CD4-positive, alpha-beta T cell (primary cell): ENCODE measurements at regions of chr14 and their contacts with region 1.

Region 1: GRCh38 chr14:95460647-95461478 is 55.6 kb downstream of the SYNE3 start:
- DNase-seq: no peak
- ATAC-seq: no peak
- H3K4me3 ChIP-seq: no peak overlapping the region
- H3K4me3 Mint-ChIP-seq: no peak overlapping the region
- H3K27ac ChIP-seq: peak overlapping the region; percentile 80 to 84
- H3K27ac Mint-ChIP-seq: peak overlapping the region; percentile 95
- H3K4me1 ChIP-seq: peaks cover 64% of the 10 kb centered on the region
- H3K4me1 Mint-ChIP-seq: peaks cover 63% of the 10 kb centered on the region
- H3K27me3 ChIP-seq: no peaks in the 10 kb centered on the region
- H3K27me3 Mint-ChIP-seq: no peaks in the 10 kb centered on the region
- CTCF ChIP-seq: no peak

Region 2: DNA sequence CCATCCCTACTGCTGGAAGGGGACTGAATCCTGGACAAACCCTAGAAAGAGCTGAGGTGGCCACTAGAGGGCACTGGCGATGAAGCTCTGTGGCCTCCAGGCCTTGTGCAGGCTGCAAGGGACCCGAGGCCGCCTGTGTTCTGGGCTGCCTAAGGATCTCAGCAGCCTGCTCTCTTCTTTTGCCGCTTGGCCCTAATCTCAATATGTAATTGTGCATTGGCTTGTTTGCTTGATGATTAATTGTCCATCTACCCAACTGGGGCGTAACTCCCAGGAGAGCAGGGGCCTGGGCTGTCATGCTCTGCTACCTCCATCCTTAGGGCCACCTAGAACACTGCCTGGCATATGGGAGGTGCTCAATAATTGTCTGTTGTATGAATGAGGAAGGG is 18.2 kb before region 1 on chr14:
- CTCF ChIA-PET with region 1: interaction called, 18 read pairs
- POLR2A ChIA-PET with region 1: interaction called, 11 read pairs
- intact Hi-C with region 1: loop called in 1 of 2 experiments (anchors 1 kb)
- DNase-seq: peak; percentile 65 to 86 (median 72)
- ATAC-seq: peak; percentile 96
- H3K4me3 ChIP-seq: no peak overlapping the region
- H3K4me3 Mint-ChIP-seq: no peak overlapping the region
- H3K27ac ChIP-seq: peak overlapping the region in 1 of 2 donors; percentile 8
- H3K27ac Mint-ChIP-seq: peak overlapping the region; percentile 73
- H3K4me1 ChIP-seq: peaks cover 8% of the 10 kb centered on the region
- H3K4me1 Mint-ChIP-seq: peaks cover 23% of the 10 kb centered on the region
- H3K27me3 ChIP-seq: no peaks in the 10 kb centered on the region
- H3K27me3 Mint-ChIP-seq: no peaks in the 10 kb centered on the region
- CTCF ChIP-seq: peak; percentile 85

Region 3: DNA sequence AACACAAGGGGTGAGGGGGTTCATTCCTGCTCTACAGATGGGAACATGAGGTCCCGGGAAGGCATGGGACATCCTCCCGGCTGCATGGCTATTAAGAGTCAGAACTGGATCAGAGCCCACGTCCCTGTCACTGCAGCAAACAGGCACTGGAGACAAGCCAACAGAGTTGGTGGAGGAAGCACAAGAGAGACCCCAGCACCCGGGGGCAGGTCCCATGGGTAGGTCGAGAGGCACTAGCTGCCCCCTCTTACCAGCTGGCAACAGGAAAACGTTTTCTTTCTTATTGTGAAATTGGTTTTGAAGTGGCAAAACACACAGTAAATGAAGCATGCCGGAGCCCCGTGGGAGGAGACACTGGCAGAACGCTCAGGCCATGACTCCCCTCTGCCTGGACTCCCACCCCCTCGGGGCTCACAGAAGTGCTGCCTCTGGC is 12.0 kb after region 1 on chr14:
- CTCF ChIA-PET with region 1: no interaction called
- POLR2A ChIA-PET with region 1: interaction called, 18 read pairs
- intact Hi-C with region 1: no loop called
- DNase-seq: no peak
- ATAC-seq: no peak
- H3K4me3 ChIP-seq: no peak overlapping the region
- H3K4me3 Mint-ChIP-seq: no peak overlapping the region
- H3K27ac ChIP-seq: peak overlapping the region in 1 of 2 donors; percentile 21
- H3K27ac Mint-ChIP-seq: peak overlapping the region; percentile 72
- H3K4me1 ChIP-seq: peaks cover 15% of the 10 kb centered on the region
- H3K4me1 Mint-ChIP-seq: peaks cover 52% of the 10 kb centered on the region
- H3K27me3 ChIP-seq: no peaks in the 10 kb centered on the region
- H3K27me3 Mint-ChIP-seq: no peaks in the 10 kb centered on the region
- CTCF ChIP-seq: no peak

Region 4: DNA sequence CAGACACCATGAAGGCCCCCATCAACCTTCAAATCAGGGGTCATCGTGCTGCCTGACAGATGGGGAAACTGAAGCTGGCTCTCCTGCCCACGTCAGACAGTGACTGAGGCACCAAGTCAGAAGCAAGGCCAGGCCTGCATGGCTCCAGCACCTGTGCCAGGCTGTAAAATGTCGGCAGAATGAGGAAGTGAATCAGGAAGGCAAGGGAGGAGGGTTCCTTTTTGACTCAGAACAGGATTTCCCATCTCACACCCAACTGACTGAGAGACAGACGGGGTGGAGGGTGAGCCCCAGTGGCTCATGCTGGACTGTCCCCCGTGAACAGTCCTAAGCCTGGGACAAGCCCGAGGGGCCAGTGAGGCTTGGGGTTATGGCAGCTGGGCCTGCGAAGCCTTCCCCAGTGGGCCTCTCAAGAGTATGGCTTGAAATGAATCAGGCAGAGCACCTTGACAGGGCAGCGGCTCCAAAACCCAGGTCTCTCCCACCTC is 34.7 kb after region 1 on chr14:
- CTCF ChIA-PET with region 1: no interaction called
- POLR2A ChIA-PET with region 1: interaction called, 5 read pairs
- intact Hi-C with region 1: loop called in 1 of 2 experiments (anchors 5 kb)
- DNase-seq: peak in 4 of 14 experiments; percentile 40 to 71 (median 58)
- ATAC-seq: peak; percentile 66
- H3K4me3 ChIP-seq: no peak overlapping the region
- H3K4me3 Mint-ChIP-seq: no peak overlapping the region
- H3K27ac ChIP-seq: peak overlapping the region; percentile 23 to 70
- H3K27ac Mint-ChIP-seq: peak overlapping the region; percentile 68
- H3K4me1 ChIP-seq: peaks cover 45% of the 10 kb centered on the region
- H3K4me1 Mint-ChIP-seq: peaks cover 84% of the 10 kb centered on the region
- H3K27me3 ChIP-seq: no peaks in the 10 kb centered on the region
- H3K27me3 Mint-ChIP-seq: no peaks in the 10 kb centered on the region
- CTCF ChIP-seq: no peak

Region 5: DNA sequence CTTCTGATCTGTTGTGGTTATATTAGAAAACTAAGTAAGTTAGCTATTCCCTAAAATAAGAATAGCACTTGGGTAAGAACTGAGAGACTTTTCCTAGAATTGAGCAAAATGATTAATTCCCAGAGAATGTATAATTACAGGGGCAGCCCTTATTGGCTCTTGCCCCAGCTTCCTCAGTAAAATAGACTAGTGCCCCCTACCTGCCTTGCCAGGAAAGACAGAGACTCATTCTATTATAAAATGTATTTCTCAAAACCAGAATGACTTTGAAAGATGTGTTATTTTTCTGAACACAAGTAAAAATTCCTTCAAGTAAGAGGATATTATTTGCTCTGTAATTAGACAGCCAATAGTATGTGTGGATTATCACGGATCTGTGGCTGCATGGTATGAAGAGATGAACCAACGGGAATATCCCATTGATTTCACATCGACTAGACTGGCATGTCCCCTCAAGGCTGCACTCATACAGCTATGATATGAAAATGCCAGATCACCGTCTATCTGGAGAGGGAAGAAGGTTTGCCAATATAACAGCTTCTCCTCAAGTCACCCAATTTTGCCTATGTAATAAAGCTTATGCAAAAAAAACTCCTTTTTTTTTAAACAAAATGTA is 66.6 kb after region 1 on chr14:
- CTCF ChIA-PET with region 1: interaction called, 12 read pairs
- POLR2A ChIA-PET with region 1: interaction called, 102 read pairs
- intact Hi-C with region 1: loop called in 1 of 2 experiments (anchors 2 kb)
- DNase-seq: peak in 9 of 14 experiments; percentile 36 to 72 (median 48)
- ATAC-seq: no peak
- H3K4me3 ChIP-seq: no peak overlapping the region
- H3K4me3 Mint-ChIP-seq: no peak overlapping the region
- H3K27ac ChIP-seq: no peak overlapping the region
- H3K27ac Mint-ChIP-seq: peak overlapping the region; percentile 31
- H3K4me1 ChIP-seq: peaks cover 41% of the 10 kb centered on the region
- H3K4me1 Mint-ChIP-seq: peaks cover 63% of the 10 kb centered on the region
- H3K27me3 ChIP-seq: no peaks in the 10 kb centered on the region
- H3K27me3 Mint-ChIP-seq: no peaks in the 10 kb centered on the region
- CTCF ChIP-seq: peak; percentile 93

Region 6: DNA sequence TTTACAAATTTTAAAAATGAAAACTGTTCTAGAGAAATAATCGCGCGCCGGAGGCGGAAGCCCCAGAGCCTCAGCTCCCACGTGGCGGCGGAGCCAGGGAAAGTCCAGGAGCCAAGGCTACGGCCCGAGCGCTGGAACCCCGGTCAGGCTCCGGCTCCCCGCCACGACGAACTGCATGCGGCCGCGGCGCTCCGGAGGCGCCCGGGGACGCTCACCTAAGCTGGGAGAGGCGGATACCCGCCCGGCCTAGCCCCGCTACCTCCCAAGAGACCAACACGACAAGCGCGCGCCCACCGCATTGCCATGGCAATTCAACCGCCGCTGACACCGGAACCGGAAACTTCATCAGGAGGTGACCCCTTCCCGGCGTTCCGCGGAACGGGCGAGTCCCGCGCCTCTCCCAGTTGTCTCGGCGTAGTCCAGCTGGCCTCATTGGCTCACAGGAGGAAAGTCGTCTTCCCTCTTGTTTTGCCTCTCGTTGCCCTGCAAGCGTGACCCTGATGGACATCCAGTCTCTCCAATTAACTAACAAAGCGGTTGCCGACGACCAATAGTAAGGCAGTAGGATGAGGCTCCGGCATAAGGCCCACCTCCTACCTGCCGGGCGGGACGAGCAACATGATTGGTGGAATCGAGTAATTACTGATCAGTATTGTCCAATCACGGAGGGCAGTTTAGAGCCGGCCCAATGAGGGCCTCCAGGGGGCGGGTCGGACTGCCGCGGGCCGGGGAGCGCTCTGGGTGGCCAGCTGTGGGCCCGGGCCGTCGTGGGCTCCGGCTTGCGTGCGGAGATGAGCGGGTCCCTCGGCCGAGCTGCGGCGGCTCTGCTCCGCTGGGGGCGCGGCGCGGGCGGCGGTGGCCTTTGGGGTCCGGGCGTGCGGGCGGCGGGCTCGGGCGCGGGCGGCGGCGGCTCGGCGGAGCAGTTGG is 73.7 kb after region 1 on chr14 and contains the start of gene GLRX5:
- CTCF ChIA-PET with region 1: no interaction called
- POLR2A ChIA-PET with region 1: interaction called, 44 read pairs
- intact Hi-C with region 1: loop called in 1 of 2 experiments (anchors 1 kb)
- DNase-seq: peak; percentile 94 to 100 (median 96)
- ATAC-seq: peak; percentile 86
- H3K4me3 ChIP-seq: peak within 1 kb of the TSS; percentile 73
- H3K4me3 Mint-ChIP-seq: peak within 1 kb of the TSS; percentile 96
- H3K27ac ChIP-seq: peak within 1 kb of the TSS; percentile 78 to 85
- H3K27ac Mint-ChIP-seq: peak within 1 kb of the TSS; percentile 85
- H3K4me1 ChIP-seq: peaks cover 37% of the 10 kb centered on the region
- H3K4me1 Mint-ChIP-seq: peaks cover 73% of the 10 kb centered on the region
- H3K27me3 ChIP-seq: no peaks in the 10 kb centered on the region
- H3K27me3 Mint-ChIP-seq: no peaks in the 10 kb centered on the region
- CTCF ChIP-seq: no peak
- total RNA-seq, gene GLRX5: 11.3 to 11.9 TPM